Natural killer cell (primary cell): ENCODE measurements at regions of chr19 and their contacts with region 1.

Region 1: GRCh38 chr19:48468775-48469288 is 337 bp upstream of the CYTH2 start:
- DNase-seq: peak; percentile 99 to 100
- ATAC-seq: peak; percentile 88 to 97 (median 88)
- H3K4me3 ChIP-seq: peak overlapping the region; percentile 92
- H3K4me3 Mint-ChIP-seq: peak overlapping the region; percentile 97
- H3K27ac ChIP-seq: peak overlapping the region; percentile 77
- H3K27ac Mint-ChIP-seq: peak overlapping the region; percentile 84 to 88
- H3K4me1 ChIP-seq: peaks cover 25% of the 10 kb centered on the region
- H3K4me1 Mint-ChIP-seq: peaks cover 6 to 47% of the 10 kb centered on the region in 2 donors
- H3K27me3 ChIP-seq: no peaks in the 10 kb centered on the region
- H3K27me3 Mint-ChIP-seq: no peaks in the 10 kb centered on the region
- CTCF ChIP-seq: no peak

Region 2: GRCh38 chr19:48492925-48493717 is 24.3 kb after region 1 on chr19:
- intact Hi-C with region 1: loop called (anchors 2 kb)
- DNase-seq: peak; percentile 88 to 89
- ATAC-seq: peak; percentile 77 to 93 (median 81)
- H3K4me3 ChIP-seq: peak overlapping the region; percentile 27
- H3K4me3 Mint-ChIP-seq: peak overlapping the region; percentile 67
- H3K27ac ChIP-seq: no peak overlapping the region
- H3K27ac Mint-ChIP-seq: peak overlapping the region; percentile 24 to 88
- H3K4me1 ChIP-seq: peaks cover 47% of the 10 kb centered on the region
- H3K4me1 Mint-ChIP-seq: peaks cover 30 to 48% of the 10 kb centered on the region in 2 donors
- H3K27me3 ChIP-seq: peaks cover 32% of the 10 kb centered on the region
- H3K27me3 Mint-ChIP-seq: peaks cover 8 to 19% of the 10 kb centered on the region in 2 donors
- CTCF ChIP-seq: no peak

Region 3: DNA sequence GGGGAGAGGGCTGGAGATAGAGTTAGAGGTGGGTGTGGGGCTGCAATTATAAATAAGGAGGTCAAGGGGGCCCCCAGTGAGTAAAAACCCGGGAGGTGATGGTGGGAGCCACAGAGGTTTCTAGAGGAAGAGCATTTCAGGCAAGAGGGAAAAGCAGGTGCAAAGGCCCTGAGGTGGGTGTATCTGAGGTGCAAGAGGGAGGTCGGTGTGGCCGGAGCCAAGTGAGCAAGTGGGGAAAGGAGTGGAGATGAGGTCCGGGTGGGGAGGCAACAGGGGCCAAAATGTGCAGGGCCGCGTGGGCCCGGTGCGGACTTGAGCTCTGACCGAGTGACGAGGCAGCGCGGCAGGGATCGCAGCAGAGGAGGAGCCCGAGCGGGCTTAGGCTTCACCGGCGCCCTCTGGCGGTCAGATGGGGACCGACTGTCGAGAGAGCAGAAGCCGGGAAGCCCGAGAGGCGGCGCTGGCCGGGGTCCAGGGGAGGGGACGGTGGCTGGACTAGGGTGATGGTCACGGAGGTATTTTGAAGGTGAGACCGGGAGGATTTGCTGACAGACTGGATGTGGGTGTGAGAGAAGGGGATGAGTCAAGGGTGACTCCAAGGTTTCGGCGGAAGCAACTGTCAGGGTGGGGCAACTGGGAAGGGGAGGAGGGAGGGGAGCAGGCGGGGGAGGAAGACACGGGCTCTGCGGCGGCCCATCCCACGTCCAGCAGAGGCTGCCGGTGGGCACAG is 120.0 kb after region 1 on chr19:
- intact Hi-C with region 1: no loop called
- DNase-seq: peak; percentile 87 to 93
- ATAC-seq: peak; percentile 92 to 94 (median 94)
- H3K4me3 ChIP-seq: peak overlapping the region; percentile 8
- H3K4me3 Mint-ChIP-seq: peak overlapping the region; percentile 49
- H3K27ac ChIP-seq: no peak overlapping the region
- H3K27ac Mint-ChIP-seq: peak overlapping the region in 1 of 2 donors; percentile 87
- H3K4me1 ChIP-seq: peaks cover 15% of the 10 kb centered on the region
- H3K4me1 Mint-ChIP-seq: peaks cover 14 to 17% of the 10 kb centered on the region in 2 donors
- H3K27me3 ChIP-seq: no peaks in the 10 kb centered on the region
- H3K27me3 Mint-ChIP-seq: peaks cover 7 to 8% of the 10 kb centered on the region in 2 donors
- CTCF ChIP-seq: peak; percentile 81

Region 4: GRCh38 chr19:48698046-48698445 is 229.2 kb after region 1 on chr19:
- intact Hi-C with region 1: no loop called
- DNase-seq: no peak
- ATAC-seq: no peak
- H3K4me3 ChIP-seq: no peak overlapping the region
- H3K4me3 Mint-ChIP-seq: no peak overlapping the region
- H3K27ac ChIP-seq: no peak overlapping the region
- H3K27ac Mint-ChIP-seq: no peak overlapping the region
- H3K4me1 ChIP-seq: peaks cover 11% of the 10 kb centered on the region
- H3K4me1 Mint-ChIP-seq: peaks cover 5 to 11% of the 10 kb centered on the region in 2 donors
- H3K27me3 ChIP-seq: peaks cover 11% of the 10 kb centered on the region
- H3K27me3 Mint-ChIP-seq: peaks cover 10 to 13% of the 10 kb centered on the region in 2 donors
- CTCF ChIP-seq: no peak

Region 5: DNA sequence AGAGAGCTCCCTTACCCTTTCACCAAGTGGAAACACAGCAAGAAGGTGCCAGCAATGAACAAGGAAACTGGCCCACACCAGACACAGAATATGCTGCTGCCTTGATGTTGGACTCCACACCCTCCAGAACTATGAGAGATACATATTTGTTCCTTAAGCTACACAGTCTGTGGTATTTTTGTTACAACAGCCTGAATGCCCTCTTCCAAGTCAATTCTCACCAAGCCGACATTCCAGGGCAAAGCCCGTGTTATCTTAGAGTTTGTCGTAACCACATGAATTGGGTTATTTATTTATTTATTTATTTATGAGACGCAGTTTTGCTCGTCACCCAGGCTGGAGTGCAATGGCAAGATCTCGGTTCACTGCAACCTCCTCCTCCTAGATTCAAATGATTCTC is 301.4 kb after region 1 on chr19:
- intact Hi-C with region 1: no loop called
- DNase-seq: no peak
- ATAC-seq: no peak
- H3K4me3 ChIP-seq: no peak overlapping the region
- H3K4me3 Mint-ChIP-seq: no peak overlapping the region
- H3K27ac ChIP-seq: no peak overlapping the region
- H3K27ac Mint-ChIP-seq: no peak overlapping the region
- H3K4me1 ChIP-seq: no peaks in the 10 kb centered on the region
- H3K4me1 Mint-ChIP-seq: no peaks in the 10 kb centered on the region
- H3K27me3 ChIP-seq: peaks cover 3% of the 10 kb centered on the region
- H3K27me3 Mint-ChIP-seq: peaks cover 9 to 15% of the 10 kb centered on the region in 2 donors
- CTCF ChIP-seq: no peak